GM12878 (cell line): ENCODE measurements at regions of chr16 and their contacts with region 1.

Region 1: GRCh38 chr16:75566040-75566810 is at the start of gene GABARAPL2:
- DNase-seq: no peak
- ATAC-seq: peak; percentile 82
- H3K4me3 ChIP-seq: peak within 1 kb of the TSS; percentile 84
- H3K27ac ChIP-seq: peak within 1 kb of the TSS; percentile 78
- H3K4me1 ChIP-seq: peaks cover 30% of the 10 kb centered on the region
- H3K27me3 ChIP-seq: no peaks in the 10 kb centered on the region
- CTCF ChIP-seq: no peak
- EP300 ChIP-seq: no peak
- POLR2A ChIP-seq: peak; percentile 85
- RAD21 ChIP-seq: no peak
- polyA plus RNA-seq, gene GABARAPL2: 358 to 359 TPM

Region 2: GRCh38 chr16:75519881-75520280 is 46.3 kb before region 1 on chr16:
- CTCF ChIA-PET with region 1: interaction called, 18 read pairs
- POLR2A ChIA-PET with region 1: interaction called, 3 read pairs
- RAD21 ChIA-PET with region 1: interaction called, 17 read pairs
- SMC1A ChIA-PET with region 1: interaction called, 13 read pairs
- in situ Hi-C with region 1: no loop called
- intact Hi-C with region 1: no loop called
- DNase-seq: no peak
- ATAC-seq: no peak
- H3K4me3 ChIP-seq: no peak overlapping the region
- H3K27ac ChIP-seq: no peak overlapping the region
- H3K4me1 ChIP-seq: no peaks in the 10 kb centered on the region
- H3K27me3 ChIP-seq: no peaks in the 10 kb centered on the region
- CTCF ChIP-seq: no peak
- EP300 ChIP-seq: no peak
- POLR2A ChIP-seq: no peak
- RAD21 ChIP-seq: no peak

Region 3: DNA sequence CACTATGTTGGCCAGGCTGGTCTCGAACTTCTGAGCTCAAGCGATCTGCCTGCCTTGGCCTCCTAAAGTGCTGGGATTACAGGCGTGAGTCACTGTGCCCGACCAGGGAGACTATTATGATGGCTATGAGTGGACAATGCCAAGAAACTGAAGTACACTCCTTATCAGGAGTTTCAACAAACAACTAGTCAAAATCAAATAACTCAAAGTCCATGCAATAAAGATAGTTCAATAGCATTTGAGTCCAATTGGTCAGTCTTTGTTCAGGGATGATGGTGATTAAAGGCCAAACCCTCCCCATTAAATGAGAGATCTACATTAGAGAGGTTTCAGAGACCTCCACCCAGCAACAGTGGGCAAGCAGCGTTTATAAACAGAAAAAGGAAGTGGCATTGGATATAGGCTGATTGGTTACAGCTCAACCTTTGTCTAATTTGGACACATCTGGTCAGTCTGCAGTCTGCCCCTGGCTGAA is 38.4 kb before region 1 on chr16:
- CTCF ChIA-PET with region 1: no interaction called
- POLR2A ChIA-PET with region 1: no interaction called
- RAD21 ChIA-PET with region 1: no interaction called
- SMC1A ChIA-PET with region 1: interaction called, 13 read pairs
- in situ Hi-C with region 1: no loop called
- intact Hi-C with region 1: no loop called
- DNase-seq: no peak
- ATAC-seq: peak; percentile 52
- H3K4me3 ChIP-seq: no peak overlapping the region
- H3K27ac ChIP-seq: no peak overlapping the region
- H3K4me1 ChIP-seq: no peaks in the 10 kb centered on the region
- H3K27me3 ChIP-seq: no peaks in the 10 kb centered on the region
- CTCF ChIP-seq: no peak
- EP300 ChIP-seq: no peak
- POLR2A ChIP-seq: no peak
- RAD21 ChIP-seq: no peak

Region 4: GRCh38 chr16:75550211-75550662 is 16.0 kb before region 1 on chr16:
- CTCF ChIA-PET with region 1: interaction called, 31 read pairs
- POLR2A ChIA-PET with region 1: interaction called, 72 read pairs
- RAD21 ChIA-PET with region 1: interaction called, 6 read pairs
- SMC1A ChIA-PET with region 1: interaction called, 40 read pairs
- in situ Hi-C with region 1: no loop called
- intact Hi-C with region 1: no loop called
- DNase-seq: peak; percentile 69
- ATAC-seq: peak; percentile 89
- H3K4me3 ChIP-seq: no peak overlapping the region
- H3K27ac ChIP-seq: no peak overlapping the region
- H3K4me1 ChIP-seq: peaks cover 8% of the 10 kb centered on the region
- H3K27me3 ChIP-seq: no peaks in the 10 kb centered on the region
- CTCF ChIP-seq: peak; percentile 70 to 78 (median 77)
- EP300 ChIP-seq: no peak
- POLR2A ChIP-seq: no peak
- RAD21 ChIP-seq: peak; percentile 85

Region 5: DNA sequence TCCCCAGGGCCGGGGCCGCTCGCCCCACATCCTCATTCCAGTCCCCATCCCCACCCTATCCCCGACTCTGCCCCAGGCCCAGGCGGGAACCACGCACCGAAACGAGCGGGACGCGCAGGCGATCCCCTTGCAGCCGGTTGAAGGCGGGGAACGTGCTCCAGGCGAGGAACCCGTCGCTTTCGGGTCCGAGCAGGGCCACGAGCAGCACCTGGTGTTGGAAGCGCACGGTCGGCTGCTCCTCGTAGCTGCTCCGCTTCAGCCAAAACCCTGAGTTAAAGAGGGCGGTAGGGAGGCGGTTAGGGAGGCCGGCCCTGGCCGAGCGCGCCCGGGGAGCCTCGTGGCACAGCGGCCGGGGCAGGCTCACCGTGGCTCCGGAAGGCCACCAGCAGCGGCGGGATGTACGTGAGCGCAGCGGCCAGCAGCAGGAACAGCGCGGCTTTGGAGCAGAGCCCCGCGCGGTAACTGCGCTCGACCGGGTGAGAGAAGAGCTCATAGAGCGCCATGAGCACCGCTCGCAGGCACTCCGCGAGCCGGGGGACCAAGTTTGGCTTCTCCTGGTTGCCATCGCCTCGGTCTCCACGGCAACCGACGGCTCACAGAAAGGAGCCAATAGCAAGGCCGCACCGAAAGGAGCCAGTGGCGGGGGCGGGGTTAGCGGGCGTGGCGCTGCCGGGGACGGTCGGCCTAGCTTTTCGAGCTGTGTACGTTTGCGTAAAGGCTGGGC is 10.4 kb before region 1 on chr16 and contains the start of gene TMEM231:
- CTCF ChIA-PET with region 1: interaction called, 31 read pairs
- POLR2A ChIA-PET with region 1: interaction called, 72 read pairs
- RAD21 ChIA-PET with region 1: interaction called, 13 read pairs
- SMC1A ChIA-PET with region 1: interaction called, 40 read pairs
- in situ Hi-C with region 1: no loop called
- intact Hi-C with region 1: no loop called
- DNase-seq: no peak
- ATAC-seq: peak; percentile 96
- H3K4me3 ChIP-seq: peak within 1 kb of the TSS; percentile 81
- H3K27ac ChIP-seq: peak within 1 kb of the TSS; percentile 65
- H3K4me1 ChIP-seq: peaks cover 4% of the 10 kb centered on the region; the same call in 1 of the 2 replicates
- H3K27me3 ChIP-seq: no peaks in the 10 kb centered on the region
- CTCF ChIP-seq: no peak
- EP300 ChIP-seq: 0 out of 4 replicates have a peak, but pooled peaks of 1 of the 2 experiments have one; percentile 21
- POLR2A ChIP-seq: peak; percentile 72
- RAD21 ChIP-seq: no peak
- polyA plus RNA-seq, gene TMEM231: 1.2 TPM

Region 6: DNA sequence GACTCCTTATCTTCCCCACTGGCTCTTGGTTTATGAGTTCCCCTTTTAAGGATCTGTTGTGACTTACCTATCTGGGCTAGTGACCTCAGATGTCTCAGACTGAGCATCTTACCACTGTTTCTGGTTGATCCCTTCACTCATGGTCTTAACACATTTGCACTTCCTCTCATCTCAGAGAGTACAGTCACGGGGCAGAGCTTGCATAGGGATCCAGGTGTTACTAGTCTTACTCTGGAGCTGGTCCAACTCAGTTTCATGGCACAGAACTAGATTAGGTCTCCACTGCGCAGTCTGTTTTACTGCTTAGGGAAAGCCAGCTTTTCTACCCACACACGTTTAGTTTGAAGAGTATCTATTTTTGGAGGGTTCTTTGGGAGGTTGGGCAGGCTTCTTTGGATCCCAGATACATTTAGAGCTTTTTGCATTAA is 10.2 kb after region 1 on chr16:
- CTCF ChIA-PET with region 1: interaction called, 5 read pairs
- POLR2A ChIA-PET with region 1: interaction called, 21 read pairs
- RAD21 ChIA-PET with region 1: interaction called, 6 read pairs
- SMC1A ChIA-PET with region 1: interaction called, 11 read pairs
- in situ Hi-C with region 1: no loop called
- intact Hi-C with region 1: no loop called
- DNase-seq: no peak
- ATAC-seq: peak; percentile 49
- H3K4me3 ChIP-seq: no peak overlapping the region
- H3K27ac ChIP-seq: peak overlapping the region; percentile 49
- H3K4me1 ChIP-seq: peaks cover 63% of the 10 kb centered on the region
- H3K27me3 ChIP-seq: no peaks in the 10 kb centered on the region
- CTCF ChIP-seq: no peak
- EP300 ChIP-seq: no peak
- POLR2A ChIP-seq: no peak
- RAD21 ChIP-seq: no peak

Region 7: DNA sequence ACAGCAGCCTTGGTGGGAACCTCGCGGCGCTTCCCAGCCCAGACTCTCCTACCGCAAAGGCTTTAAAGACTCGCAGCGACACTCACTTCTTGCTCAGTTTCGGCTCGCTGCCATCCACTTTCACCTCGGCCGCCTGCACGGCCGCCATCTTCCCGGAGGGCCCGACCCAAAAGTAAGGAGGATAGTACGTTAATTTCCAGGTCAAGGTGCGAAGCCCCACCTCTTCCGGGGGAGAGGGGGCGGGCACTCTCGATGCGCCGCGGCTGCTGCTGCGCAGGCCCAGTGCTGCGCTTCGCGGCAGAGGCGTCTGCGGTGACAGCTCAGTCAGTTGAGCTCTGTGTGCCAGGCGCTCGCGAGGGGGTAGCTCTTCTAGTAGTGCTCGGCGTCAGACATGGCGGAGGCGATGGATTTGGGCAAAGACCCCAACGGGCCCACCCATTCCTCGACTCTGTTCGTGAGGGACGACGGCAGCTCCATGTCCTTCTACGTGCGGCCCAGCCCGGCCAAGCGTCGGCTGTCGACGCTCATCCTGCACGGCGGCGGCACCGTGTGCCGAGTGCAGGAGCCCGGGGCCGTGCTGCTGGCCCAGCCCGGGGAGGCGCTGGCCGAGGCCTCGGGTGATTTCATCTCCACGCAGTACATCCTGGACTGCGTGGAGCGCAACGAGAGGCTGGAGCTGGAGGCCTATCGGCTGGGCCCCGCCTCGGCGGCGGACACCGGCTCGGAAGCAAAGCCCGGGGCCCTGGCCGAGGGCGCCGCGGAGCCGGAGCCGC is 81.5 kb after region 1 on chr16 and contains the starts of genes KARS1 and TERF2IP:
- CTCF ChIA-PET with region 1: interaction called, 4 read pairs
- POLR2A ChIA-PET with region 1: interaction called, 47 read pairs
- RAD21 ChIA-PET with region 1: interaction called, 12 read pairs
- SMC1A ChIA-PET with region 1: interaction called, 7 read pairs
- in situ Hi-C with region 1: no loop called
- intact Hi-C with region 1: loop called (anchors 1 kb)
- DNase-seq: peak; percentile 85
- ATAC-seq: peak; percentile 91
- H3K4me3 ChIP-seq: peak within 1 kb of the TSS; percentile 85
- H3K27ac ChIP-seq: peak within 1 kb of the TSS; percentile 86
- H3K4me1 ChIP-seq: peaks cover 25% of the 10 kb centered on the region
- H3K27me3 ChIP-seq: no peaks in the 10 kb centered on the region; a peak in 1 of 4 replicates
- CTCF ChIP-seq: no peak
- EP300 ChIP-seq: no peak
- POLR2A ChIP-seq: peak; percentile 98
- RAD21 ChIP-seq: no peak
- polyA plus RNA-seq, gene KARS1: 187 to 207 TPM
- polyA plus RNA-seq, gene TERF2IP: 19.6 to 40.6 TPM